ENCODE measurements at regions of chr20 and their contacts with region 1.

Region 1: DNA sequence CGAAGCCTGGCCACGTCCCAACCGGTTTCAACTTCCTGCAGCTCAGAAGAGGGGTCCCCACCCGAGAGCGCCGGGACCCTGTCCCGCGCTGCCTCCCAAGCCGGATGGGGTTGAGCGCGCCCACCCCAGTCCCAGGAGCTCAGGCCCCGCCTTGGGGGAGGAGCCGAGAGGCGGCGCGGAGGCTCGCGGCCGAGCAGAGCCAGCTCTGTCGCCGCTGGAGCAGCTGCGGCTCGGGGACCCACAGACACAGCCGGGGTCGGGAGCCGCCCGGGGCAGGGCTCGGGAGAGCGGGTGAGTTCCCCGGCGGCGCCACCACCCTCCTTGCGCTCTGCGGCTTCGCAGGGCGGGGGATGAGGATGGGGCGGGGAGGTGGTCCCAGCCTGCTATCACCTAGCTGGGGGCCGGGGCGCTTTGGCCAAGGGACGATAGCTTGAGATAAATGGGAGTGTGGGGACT is at the start of gene PPP1R16B:
- DNase-seq: peak; percentile 91
- ATAC-seq: peak; percentile 83
- H3K4me3 Mint-ChIP-seq: peak within 1 kb of the TSS; percentile 88
- H3K27ac Mint-ChIP-seq: peak within 1 kb of the TSS; percentile 99
- H3K4me1 Mint-ChIP-seq: peaks cover 67% of the 10 kb centered on the region
- H3K27me3 Mint-ChIP-seq: no peaks in the 10 kb centered on the region
- total RNA-seq, gene PPP1R16B: 63.4 to 65.1 TPM

Region 2: DNA sequence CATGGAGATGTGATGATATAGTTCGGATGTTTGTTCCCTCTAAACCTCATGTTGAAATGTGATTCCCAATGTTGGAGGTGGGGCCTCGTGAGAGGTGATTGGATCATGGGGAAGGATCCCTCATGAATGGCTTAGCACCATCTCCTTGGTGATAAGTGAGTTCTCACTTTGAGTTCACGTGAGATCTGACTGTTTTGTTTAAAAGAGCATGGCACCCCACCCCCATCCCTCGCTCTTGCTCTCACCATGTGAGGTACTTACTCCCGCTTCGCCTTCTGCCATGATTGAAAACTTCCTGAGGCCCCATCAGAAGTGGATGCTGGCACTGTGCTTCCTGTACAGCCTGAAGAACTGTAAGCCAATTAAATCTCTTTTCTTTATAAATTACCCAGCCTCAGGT is 70.4 kb before region 1 on chr20:
- CTCF ChIA-PET with region 1: no interaction called
- POLR2A ChIA-PET with region 1: no interaction called
- DNase-seq: no peak
- ATAC-seq: no peak
- H3K4me3 Mint-ChIP-seq: no peak overlapping the region
- H3K27ac Mint-ChIP-seq: no peak overlapping the region
- H3K4me1 Mint-ChIP-seq: peaks cover 10% of the 10 kb centered on the region
- H3K27me3 Mint-ChIP-seq: peaks cover 63% of the 10 kb centered on the region

Region 3: DNA sequence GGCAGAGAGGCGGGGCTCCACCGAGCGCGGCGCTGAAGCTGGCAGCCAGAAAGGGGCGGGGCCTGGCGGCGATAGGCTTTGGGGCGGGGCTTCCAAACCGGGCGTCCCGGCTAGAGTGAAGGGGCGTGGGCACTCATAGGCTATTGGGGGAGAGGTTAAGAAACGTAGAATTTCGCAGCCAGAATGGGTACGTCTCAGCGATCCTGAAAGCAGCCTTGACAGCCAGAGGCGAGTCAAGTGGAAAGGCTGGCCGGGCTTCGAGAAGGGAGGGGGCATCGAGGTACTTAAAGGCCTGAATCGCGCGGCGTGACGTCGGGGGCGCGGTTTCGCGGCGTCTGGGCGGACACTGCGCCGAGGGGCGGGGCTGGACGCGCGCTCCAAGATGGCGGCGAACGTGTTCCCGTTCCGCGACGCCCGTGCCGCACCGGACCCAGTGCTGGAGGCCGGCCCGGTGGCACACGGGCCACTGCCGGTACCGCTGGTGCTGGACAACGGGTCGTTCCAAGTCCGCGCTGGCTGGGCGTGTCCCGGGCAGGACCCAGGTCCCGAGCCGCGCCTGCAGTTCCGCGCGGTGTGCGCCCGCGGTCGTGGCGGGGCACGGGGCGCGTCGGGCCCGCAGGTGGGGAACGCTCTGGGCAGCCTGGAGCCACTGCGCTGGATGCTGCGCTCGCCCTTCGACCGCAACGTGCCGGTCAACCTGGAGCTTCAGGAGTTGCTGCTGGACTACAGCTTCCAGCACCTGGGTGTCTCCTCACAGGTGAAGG is 57.3 kb before region 1 on chr20 and contains the start of gene ACTR5:
- CTCF ChIA-PET with region 1: interaction called, 9 read pairs
- POLR2A ChIA-PET with region 1: interaction called, 14 read pairs
- DNase-seq: peak; percentile 97
- ATAC-seq: peak; percentile 92
- H3K4me3 Mint-ChIP-seq: peak within 1 kb of the TSS; percentile 93
- H3K27ac Mint-ChIP-seq: peak within 1 kb of the TSS; percentile 97
- H3K4me1 Mint-ChIP-seq: peaks cover 29% of the 10 kb centered on the region
- H3K27me3 Mint-ChIP-seq: peaks cover 5% of the 10 kb centered on the region
- total RNA-seq, gene ACTR5: 8.4 to 9.2 TPM

Region 4: DNA sequence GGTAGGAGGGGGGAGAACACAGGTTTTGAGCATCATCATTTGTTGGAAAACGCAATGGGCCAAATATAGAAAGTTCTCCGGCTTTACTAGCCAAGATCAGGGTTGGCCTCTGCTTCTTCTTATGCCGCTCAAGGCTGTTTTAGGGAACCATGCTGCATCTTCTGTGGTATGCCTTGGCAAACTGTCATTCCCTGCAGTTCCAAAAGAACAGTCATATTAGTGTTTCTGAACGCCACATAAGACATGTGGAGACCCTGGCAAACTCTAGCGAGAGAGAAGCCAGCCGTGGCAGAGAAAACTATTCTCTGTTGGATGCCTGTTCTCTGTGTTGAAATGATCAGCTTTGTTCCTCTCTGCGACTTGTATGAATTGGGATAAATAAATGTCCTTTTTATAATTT is 46.4 kb before region 1 on chr20:
- CTCF ChIA-PET with region 1: no interaction called
- POLR2A ChIA-PET with region 1: no interaction called
- DNase-seq: no peak
- ATAC-seq: no peak
- H3K4me3 Mint-ChIP-seq: no peak overlapping the region
- H3K27ac Mint-ChIP-seq: no peak overlapping the region
- H3K4me1 Mint-ChIP-seq: peaks cover 10% of the 10 kb centered on the region
- H3K27me3 Mint-ChIP-seq: no peaks in the 10 kb centered on the region

Region 5: DNA sequence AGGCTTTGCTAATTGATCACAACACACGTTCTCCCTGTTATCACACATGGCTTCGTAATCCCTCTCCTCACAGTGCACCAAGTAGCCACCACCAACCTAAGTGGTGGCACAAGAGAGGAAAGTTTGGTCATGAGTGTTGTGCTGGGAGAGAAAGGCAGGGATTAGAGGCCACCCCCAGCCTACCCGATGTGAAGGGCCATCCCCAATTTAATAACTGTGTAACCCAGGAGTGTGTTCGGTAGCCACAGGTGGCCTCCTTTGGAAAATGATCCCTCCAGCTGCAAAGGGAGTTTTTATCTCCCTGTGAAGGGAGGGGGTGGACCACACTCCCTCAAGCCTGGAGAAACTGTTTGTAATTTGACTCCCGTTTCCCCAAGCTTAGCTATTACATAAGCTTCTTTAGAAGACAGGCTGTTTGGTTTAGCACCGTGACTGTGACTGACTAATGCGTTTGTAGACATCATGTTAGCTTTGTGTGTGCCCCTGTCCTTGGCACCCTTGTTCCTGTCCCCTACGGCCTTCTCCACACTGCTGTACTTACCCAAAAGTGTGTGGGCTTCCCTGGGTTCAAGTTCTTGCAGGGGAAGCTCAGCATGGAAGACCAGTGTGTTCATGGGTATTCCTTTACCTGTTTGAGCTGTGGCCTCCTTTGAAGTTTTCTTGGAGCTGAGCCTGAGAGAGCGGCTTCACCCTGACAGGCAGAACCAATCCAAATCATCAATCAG is 20.5 kb after region 1 on chr20:
- CTCF ChIA-PET with region 1: interaction called, 4 read pairs
- POLR2A ChIA-PET with region 1: interaction called, 13 read pairs
- DNase-seq: no peak
- ATAC-seq: no peak
- H3K4me3 Mint-ChIP-seq: no peak overlapping the region
- H3K27ac Mint-ChIP-seq: no peak overlapping the region
- H3K4me1 Mint-ChIP-seq: peaks cover 70% of the 10 kb centered on the region
- H3K27me3 Mint-ChIP-seq: no peaks in the 10 kb centered on the region

Region 6: DNA sequence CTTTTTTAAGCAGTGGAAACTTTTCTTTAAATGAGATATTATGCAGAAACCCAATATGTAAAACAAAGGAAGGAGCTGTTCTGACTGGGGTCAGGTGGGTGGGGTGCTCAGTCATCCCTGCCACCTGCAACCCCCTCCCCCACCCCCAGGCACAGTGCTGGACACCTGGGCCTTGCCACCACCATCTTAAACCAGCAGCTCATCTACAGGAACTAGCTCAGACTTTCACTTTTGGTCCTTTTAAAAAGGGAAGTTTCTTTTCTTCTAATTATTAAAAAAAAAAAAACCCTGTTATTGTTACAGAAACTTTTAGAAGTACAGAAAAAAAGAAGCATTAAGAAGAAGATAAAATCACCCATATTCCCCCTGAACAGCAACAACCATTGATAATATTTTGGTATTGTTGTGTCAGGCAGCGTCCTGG is 37.0 kb after region 1 on chr20:
- CTCF ChIA-PET with region 1: interaction called, 13 read pairs
- POLR2A ChIA-PET with region 1: interaction called, 37 read pairs
- DNase-seq: peak; percentile 58
- ATAC-seq: peak; percentile 56
- H3K4me3 Mint-ChIP-seq: peak overlapping the region; percentile 64
- H3K27ac Mint-ChIP-seq: peak overlapping the region; percentile 77
- H3K4me1 Mint-ChIP-seq: peaks cover 74% of the 10 kb centered on the region
- H3K27me3 Mint-ChIP-seq: no peaks in the 10 kb centered on the region

Region 7: GRCh38 chr20:38883081-38883980 is 77.8 kb after region 1 on chr20:
- CTCF ChIA-PET with region 1: interaction called, 12 read pairs
- POLR2A ChIA-PET with region 1: interaction called, 16 read pairs
- DNase-seq: no peak
- ATAC-seq: peak; percentile 35
- H3K4me3 Mint-ChIP-seq: peak overlapping the region; percentile 6
- H3K27ac Mint-ChIP-seq: peak overlapping the region; percentile 80
- H3K4me1 Mint-ChIP-seq: peaks cover 62% of the 10 kb centered on the region
- H3K27me3 Mint-ChIP-seq: no peaks in the 10 kb centered on the region